ENCODE measurements at regions of chrX and their contacts with region 1.

Region 1: DNA sequence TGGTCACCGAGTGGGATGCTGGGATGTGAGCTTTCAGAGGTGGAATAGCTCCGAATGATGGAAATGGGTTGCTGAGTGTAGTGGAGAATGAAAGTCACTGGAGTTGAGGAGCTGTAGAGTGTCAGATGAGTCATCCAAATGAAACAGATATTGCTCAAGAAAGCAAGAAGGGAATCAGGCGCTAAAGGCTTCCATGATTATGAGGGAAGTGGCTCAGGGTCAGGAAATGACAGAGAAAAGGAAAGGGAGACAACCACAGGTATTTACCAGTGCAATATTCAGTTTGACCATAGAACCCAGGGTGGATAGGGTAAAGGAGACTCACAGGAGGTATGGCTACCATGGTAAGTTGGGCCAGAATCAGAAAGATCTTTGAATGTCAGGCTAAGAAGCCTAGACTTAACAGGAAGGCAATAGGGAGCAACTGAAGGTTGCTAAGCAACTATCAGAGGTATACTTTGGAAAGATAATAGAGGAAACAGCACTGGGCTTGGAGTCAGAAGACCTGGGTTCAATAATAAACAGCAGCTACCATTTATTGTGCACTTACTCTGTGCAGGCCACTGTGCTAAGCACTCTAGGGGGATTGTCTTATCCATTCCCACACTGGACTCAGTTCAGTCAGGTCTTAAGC is 11.7 kb downstream of the LAS1L start:
- DNase-seq: no peak
- ATAC-seq: no peak
- H3K4me3 ChIP-seq: no peak overlapping the region
- H3K27ac ChIP-seq: no peak overlapping the region
- H3K4me1 ChIP-seq: no peaks in the 10 kb centered on the region
- H3K27me3 ChIP-seq: no peaks in the 10 kb centered on the region
- CTCF ChIP-seq: no peak
- POLR2A ChIP-seq: no peak

Region 2: DNA sequence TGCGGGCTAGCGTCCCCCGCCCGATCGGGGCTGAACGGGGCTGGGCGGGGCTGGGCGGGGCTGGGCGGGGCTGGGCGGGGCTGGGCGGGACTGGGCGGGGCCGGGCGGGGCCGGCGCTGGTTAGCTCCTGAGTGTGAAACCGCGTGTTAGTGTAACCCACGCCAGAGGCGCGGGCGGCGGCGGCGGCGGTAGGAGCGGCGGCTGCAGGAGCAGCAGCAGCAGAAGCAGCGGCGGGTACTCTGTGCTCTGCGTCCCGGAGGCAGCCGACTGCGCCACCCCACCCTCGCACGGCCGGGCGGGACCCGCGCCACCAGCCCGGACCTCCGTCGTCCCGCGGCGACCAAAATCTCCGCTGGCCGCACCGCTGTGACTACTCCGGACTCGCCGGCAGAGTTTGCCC is 116.3 kb before region 1 on chrX:
- in situ Hi-C with region 1: loop called in 1 of 4 experiments (anchors 25 kb)
- intact Hi-C with region 1: no loop called
- DNase-seq: no peak
- ATAC-seq: no peak
- H3K4me3 ChIP-seq: peak overlapping the region in 2 of 4 donors; percentile 9 to 18
- H3K27ac ChIP-seq: no peak overlapping the region
- H3K4me1 ChIP-seq: no peaks in the 10 kb centered on the region
- H3K27me3 ChIP-seq: peaks cover 0 to 25% (median 9%) of the 10 kb centered on the region in 3 donors
- CTCF ChIP-seq: no peak
- POLR2A ChIP-seq: no peak

Region 3: DNA sequence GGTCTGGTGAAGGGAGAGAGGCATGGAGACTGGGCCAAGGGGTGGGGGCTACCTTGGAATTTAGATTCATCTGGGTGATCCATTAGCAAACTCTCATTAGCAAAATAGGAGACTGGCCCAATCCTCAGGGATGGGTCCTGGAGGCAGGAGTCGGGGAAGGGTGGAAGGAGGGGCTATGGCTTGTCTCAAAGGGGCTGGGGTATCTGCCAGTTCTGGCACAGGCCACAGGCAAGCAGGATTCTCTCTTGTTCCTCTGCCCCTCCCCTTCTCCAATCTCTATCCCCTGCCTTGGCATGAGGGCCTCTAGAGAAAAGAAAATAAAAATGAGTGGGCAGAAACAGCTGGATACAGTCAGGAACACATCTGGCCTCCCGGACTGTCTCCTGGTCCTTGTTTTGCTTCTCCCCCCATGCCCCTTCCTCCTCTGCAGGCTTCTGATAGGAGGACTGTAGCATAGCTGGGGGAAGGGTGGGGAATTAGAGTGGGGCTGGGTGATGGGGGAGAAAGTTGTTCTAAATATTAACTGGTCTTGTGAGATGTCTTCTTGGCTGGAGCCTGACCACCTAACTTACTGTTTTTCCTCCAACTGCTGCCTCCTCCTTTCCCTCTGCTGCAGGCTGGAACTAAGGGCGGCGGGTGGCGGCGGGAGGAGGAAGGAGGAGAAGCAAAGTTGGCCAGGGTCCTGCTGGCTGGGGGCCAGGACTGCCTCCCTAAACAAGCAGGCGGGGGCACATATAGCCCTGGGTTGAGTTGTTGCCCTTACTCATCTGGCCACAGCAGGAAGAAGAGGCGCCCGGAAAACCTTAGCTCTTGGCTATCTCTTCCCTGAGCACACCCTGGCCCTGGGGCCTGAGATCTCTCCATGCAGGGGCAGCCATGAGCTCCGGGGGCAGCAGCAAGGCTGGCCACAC is 65.0 kb after region 1 on chrX:
- in situ Hi-C with region 1: no loop called
- intact Hi-C with region 1: no loop called
- DNase-seq: peak; percentile 22 to 46
- ATAC-seq: peak; percentile 19 to 51
- H3K4me3 ChIP-seq: peak overlapping the region in 1 of 4 donors; percentile 12
- H3K27ac ChIP-seq: no peak overlapping the region
- H3K4me1 ChIP-seq: no peaks in the 10 kb centered on the region
- H3K27me3 ChIP-seq: no peaks in the 10 kb centered on the region
- CTCF ChIP-seq: no peak
- POLR2A ChIP-seq: no peak

Region 4: GRCh38 chrX:65667503-65668376 is 144.9 kb after region 1 on chrX and contains the start of gene MSN:
- in situ Hi-C with region 1: loop called in 1 of 4 experiments (anchors 25 kb)
- intact Hi-C with region 1: no loop called
- DNase-seq: peak; percentile 60 to 66
- ATAC-seq: peak; percentile 75 to 83
- H3K4me3 ChIP-seq: peak within 1 kb of the TSS; percentile 71 to 82 (median 78)
- H3K27ac ChIP-seq: peak within 1 kb of the TSS; percentile 85 to 96 (median 95)
- H3K4me1 ChIP-seq: peaks cover 4 to 24% of the 10 kb centered on the region in 2 donors
- H3K27me3 ChIP-seq: no peaks in the 10 kb centered on the region
- CTCF ChIP-seq: peak in 1 of 5 experiments; percentile 17
- POLR2A ChIP-seq: peak; percentile 72 to 86
- total RNA-seq, gene MSN: 39.1 to 69.6 (median 59.6) TPM

Measured in gastrocnemius medialis (tissue), 4 donors.